Activated T-helper 1 cell treated with anti-CD3 and anti-CD28 coated beads, Interleukin-12 subunit alpha, Interleukin-12 subunit beta, Interleukin-2, Interleukin-4 antibody, amounts not matched to agents 30 ng/mL and 10 ng/mL and 1 ng/mL, durations not matched to agents 14 hours and 24 hours and 36 hours (primary cell): ENCODE measurements at regions of chr7 and their contacts with region 1.

Region 1: DNA sequence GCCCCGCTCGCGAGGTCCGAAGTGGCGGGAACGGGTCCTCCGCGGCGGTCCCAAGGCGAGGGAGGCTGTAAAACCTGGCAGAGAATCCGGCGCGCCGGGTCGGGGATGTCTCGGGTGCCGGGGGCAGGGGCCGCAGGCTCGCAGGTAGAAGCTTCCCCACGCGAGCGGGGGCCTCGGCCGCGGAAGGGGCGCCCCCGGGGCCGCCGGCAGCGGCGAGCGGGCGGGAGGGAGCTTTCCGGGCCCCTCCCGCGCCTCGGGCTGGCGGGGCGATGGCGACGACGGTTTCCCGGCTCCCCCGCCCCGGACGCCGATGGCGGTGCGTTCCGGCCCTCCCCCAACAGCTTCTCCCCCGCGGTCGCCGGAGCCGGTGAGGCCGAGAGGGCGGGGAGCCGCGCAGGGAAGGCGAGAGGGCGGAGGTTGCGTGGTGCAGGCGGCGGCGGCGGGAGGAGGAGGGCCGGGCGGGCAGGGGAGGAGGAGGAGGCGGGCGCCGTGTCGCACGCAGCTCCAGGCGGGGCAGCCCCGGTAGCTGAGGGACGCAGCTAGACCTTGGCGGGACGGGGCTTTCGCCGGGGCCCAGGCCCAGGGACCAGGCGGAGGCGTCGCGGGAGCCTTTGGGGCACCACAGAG is at the start of gene CUL1:
- DNase-seq: peak; percentile 83
- H3K4me3 Mint-ChIP-seq: peak within 1 kb of the TSS; percentile 99
- H3K27ac Mint-ChIP-seq: peak within 1 kb of the TSS; percentile 97
- H3K4me1 Mint-ChIP-seq: peaks cover 59% of the 10 kb centered on the region
- H3K27me3 Mint-ChIP-seq: peaks cover 3% of the 10 kb centered on the region
- total RNA-seq, gene CUL1: 79.3 and 81.3 TPM in 2 replicates

Region 2: DNA sequence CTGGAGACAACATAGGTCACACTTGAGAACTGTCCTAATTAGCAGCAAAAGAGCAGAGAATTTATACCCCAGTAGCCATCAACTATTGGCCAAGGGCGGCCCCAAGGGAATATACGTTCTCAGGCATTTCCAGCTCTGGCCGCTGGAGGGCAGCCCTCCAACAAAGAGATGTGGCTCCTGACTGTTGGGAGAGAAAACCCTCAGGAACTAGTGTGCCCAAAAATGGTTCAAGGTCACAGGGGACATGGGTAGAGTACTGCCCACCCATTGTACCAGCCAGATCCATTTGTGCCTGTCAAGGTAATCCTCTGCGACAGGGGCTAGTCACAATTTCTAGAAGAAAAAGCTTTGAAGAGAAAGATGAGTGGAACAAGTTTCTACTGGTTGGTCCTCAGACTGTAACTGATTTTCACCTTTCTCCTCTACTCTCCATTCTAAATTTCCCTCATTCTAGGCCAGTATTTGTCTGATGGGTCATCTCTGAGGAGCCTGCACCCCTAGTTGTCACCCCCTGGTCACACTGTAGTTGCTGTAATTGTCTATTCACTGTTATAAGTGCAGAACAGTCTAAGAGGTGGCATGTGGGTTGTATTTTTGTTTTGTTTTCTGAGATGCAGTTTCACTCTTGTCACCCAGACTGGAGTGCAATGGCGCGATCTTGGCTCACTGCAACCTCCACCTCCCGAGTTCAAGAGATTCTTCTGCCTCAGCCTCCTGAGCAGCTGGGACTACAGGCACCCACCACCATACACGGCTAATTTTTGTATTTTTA is 122.7 kb before region 1 on chr7:
- intact Hi-C with region 1: loop called (anchors 2 kb)
- DNase-seq: peak; percentile 47
- H3K4me3 Mint-ChIP-seq: no peak overlapping the region
- H3K27ac Mint-ChIP-seq: no peak overlapping the region
- H3K4me1 Mint-ChIP-seq: peaks cover 24% of the 10 kb centered on the region
- H3K27me3 Mint-ChIP-seq: peaks cover 3% of the 10 kb centered on the region

Region 3: DNA sequence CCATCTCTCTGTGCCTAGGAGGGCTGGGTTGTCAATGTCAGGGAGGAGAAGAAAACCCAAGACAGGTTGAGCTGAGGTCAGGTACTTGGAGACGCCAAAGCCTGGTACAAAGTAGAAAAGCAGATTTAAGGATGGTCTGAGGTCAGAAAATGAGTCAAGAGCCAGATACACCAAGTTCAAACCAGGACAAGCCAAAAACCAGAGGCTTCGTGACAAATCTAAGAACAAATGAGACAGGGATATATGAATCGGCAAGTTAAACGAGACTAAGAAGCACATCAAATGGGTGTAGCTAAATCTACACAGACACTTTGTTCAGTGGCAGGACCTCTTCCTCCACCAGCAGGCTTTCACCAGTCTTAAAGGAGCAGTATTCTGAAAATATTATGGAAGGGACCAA is 73.8 kb before region 1 on chr7:
- intact Hi-C with region 1: loop called (anchors 5 kb)
- DNase-seq: no peak
- H3K4me3 Mint-ChIP-seq: no peak overlapping the region
- H3K27ac Mint-ChIP-seq: no peak overlapping the region
- H3K4me1 Mint-ChIP-seq: peaks cover 40% of the 10 kb centered on the region
- H3K27me3 Mint-ChIP-seq: peaks cover 3% of the 10 kb centered on the region

Region 4: DNA sequence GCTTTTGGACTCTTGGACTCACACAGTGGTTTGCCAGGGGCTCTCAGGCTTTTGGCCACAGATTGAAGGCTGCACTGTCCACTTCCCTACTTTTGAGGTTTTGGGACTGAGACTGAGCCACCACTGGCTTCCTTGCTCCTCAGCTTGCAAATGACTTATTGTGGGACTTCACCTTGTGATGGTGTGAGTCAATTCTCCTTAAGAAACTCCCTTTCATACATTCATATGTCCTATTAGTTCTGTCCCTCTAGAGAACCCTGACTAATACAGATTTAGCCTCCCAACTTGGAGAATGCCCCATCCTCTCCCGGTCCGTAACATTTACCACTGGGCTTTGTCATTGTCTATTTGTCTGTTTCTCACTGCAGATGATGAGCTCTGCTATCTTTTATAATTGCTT is 52.6 kb before region 1 on chr7:
- intact Hi-C with region 1: no loop called
- DNase-seq: no peak
- H3K4me3 Mint-ChIP-seq: no peak overlapping the region
- H3K27ac Mint-ChIP-seq: no peak overlapping the region
- H3K4me1 Mint-ChIP-seq: no peaks in the 10 kb centered on the region
- H3K27me3 Mint-ChIP-seq: peaks cover 13% of the 10 kb centered on the region

Region 5: GRCh38 chr7:148884299-148885022 is 186.0 kb after region 1 on chr7:
- intact Hi-C with region 1: loop called (anchors 2 kb)
- DNase-seq: peak; percentile 95
- H3K4me3 Mint-ChIP-seq: peak overlapping the region; percentile 93
- H3K27ac Mint-ChIP-seq: peak overlapping the region; percentile 98
- H3K4me1 Mint-ChIP-seq: peaks cover 43% of the 10 kb centered on the region
- H3K27me3 Mint-ChIP-seq: no peaks in the 10 kb centered on the region

Region 6: DNA sequence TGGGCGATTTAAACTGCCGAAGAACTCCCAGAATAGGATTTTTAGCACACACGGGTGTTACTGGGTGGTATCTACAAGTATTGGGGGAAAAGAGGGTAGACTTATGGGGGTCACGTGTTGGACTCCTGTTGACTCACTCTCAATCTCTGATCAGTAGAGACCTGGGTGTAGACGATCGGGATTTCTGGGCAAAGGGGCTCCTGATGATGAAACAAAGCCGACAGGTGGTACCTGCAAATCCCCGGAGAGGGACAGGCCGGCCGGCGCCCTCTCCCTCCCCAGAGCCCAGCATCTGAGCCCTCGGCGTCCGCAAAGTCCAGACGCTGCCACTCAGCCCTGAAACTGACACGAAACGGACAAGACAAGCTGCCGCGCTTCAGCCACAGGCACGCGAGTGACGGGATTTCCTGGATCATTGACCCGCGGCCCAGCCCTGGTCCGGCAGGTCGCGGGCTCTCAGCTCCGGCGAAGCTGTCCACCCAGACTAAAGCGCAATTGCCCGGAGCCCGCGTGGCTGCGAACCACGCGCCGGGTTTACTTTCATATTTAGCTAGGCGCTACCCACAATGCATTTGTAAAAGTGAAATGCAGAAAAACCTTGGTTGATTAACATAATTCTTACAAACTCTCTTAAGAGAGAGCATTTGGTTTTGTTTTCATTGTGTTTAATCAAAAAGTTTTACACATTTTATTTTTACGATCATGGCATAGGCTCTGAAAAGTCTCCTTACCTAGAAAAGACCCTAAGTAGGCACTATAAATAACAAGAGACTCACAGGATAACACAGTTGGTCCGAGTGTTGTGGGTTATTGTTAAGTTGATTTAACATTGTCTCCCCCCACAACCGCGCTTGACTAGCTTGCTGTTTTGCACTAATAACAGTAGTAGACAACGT is 242.4 kb after region 1 on chr7:
- intact Hi-C with region 1: loop called (anchors 1 kb)
- DNase-seq: peak; percentile 65
- H3K4me3 Mint-ChIP-seq: peak overlapping the region; percentile 96
- H3K27ac Mint-ChIP-seq: peak overlapping the region; percentile 98
- H3K4me1 Mint-ChIP-seq: peaks cover 31% of the 10 kb centered on the region
- H3K27me3 Mint-ChIP-seq: no peaks in the 10 kb centered on the region

Region 7: DNA sequence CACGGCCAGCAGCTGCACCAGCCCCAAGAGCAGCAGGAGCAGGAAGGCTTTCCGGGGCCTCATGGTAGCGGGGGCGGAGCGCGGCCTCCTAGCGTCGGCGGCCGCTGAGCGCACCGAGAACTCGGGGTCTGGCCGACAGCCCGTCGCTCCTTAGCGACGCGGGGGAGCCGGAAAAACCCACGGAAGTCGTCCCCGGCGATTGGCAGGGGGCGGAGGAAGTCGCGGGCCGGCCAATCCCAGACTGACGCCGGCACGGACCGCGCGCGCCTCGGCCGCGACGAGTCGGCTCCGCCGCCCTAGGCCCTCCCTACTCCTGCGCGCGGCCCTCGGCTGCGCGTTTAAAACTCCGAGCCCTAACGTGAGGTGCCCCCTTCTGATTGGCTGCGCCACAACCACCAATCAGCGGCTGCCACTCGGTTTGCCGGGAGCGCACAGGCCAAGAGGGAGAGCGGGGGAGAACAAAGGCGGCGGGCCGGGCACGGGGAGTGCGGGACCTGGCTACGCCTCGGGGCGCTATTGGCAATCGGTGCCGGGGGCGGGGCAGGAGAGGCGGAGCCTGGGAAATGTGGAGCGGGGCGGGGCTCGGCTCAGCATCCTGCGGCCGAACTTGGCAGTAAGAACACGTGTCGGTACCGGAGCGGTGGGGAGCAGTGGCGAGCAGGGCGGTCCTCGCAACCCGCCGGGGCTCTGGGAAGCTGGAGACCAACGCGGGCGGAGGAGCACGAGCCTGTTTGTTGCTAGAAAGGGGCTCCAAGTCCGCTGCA is 330.0 kb after region 1 on chr7 and contains the start of gene PDIA4:
- intact Hi-C with region 1: loop called (anchors 2 kb)
- DNase-seq: peak; percentile 100
- H3K4me3 Mint-ChIP-seq: peak within 1 kb of the TSS; percentile 98
- H3K27ac Mint-ChIP-seq: peak within 1 kb of the TSS; percentile 93
- H3K4me1 Mint-ChIP-seq: peaks cover 34% of the 10 kb centered on the region
- H3K27me3 Mint-ChIP-seq: peaks cover 2% of the 10 kb centered on the region
- total RNA-seq, gene PDIA4: 132 and 142 TPM in 2 replicates